HEK293 (cell line): ENCODE measurements at regions of chr1 and their contacts with region 1.

Region 1: DNA sequence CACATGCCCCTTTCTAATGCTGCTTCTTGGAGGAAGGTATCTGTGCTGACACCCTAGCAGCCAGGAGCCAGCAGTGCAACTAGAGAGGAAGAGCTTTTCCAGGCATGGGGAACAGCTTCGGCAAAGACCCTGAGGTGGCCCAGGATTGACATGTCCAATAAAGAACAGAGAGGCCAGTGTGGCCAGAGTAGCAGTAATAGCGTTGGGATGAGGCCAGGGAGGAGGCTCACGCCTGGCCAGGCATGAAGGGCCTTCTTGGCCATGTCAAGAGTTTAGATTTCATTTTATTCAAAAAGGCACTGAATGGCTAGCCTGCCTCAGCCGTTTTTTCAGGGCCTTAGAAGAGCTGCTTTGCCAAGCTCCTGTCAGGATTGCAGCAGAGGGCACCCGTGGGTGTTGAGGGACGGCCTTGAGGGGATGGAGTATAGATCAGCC is 16.3 kb upstream of the ADAMTSL4 start:
- H3K4me3 ChIP-seq: no peak overlapping the region
- H3K27ac ChIP-seq: no peak overlapping the region
- H3K4me1 ChIP-seq: no peaks in the 10 kb centered on the region
- CTCF ChIP-seq: no peak

Region 2: GRCh38 chr1:150281221-150281836 is 251.6 kb before region 1 on chr1:
- CTCF ChIA-PET with region 1: no interaction called
- POLR2A ChIA-PET with region 1: no interaction called
- H3K4me3 ChIP-seq: peak overlapping the region; percentile 28
- H3K27ac ChIP-seq: no peak overlapping the region; the same call in 1 of the 2 replicates
- H3K4me1 ChIP-seq: no peaks in the 10 kb centered on the region
- CTCF ChIP-seq: peak; percentile 60

Region 3: DNA sequence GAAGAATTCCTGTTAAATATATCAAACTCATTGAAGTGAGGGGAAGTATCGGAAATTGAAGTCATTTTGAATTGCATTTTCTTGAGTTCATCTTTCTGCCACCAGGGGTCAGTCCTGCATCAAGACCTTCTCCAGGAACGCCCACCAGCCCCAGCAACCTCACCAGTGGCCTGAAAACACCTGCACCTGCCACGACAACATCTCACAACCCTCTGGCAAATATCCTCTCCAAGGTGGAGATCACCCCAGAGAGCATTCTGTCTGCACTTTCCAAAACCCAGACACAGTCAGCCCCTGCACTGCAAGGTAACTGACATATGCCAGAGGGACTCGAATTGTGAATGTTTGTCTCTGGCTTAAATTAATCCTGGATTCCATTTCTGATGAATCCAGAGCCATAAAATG is 68.5 kb before region 1 on chr1:
- CTCF ChIA-PET with region 1: interaction called, 15 read pairs
- POLR2A ChIA-PET with region 1: no interaction called
- H3K4me3 ChIP-seq: no peak overlapping the region
- H3K27ac ChIP-seq: no peak overlapping the region
- H3K4me1 ChIP-seq: no peaks in the 10 kb centered on the region
- CTCF ChIP-seq: peak; percentile 51; the same call in 1 of the 2 replicates

Region 4: DNA sequence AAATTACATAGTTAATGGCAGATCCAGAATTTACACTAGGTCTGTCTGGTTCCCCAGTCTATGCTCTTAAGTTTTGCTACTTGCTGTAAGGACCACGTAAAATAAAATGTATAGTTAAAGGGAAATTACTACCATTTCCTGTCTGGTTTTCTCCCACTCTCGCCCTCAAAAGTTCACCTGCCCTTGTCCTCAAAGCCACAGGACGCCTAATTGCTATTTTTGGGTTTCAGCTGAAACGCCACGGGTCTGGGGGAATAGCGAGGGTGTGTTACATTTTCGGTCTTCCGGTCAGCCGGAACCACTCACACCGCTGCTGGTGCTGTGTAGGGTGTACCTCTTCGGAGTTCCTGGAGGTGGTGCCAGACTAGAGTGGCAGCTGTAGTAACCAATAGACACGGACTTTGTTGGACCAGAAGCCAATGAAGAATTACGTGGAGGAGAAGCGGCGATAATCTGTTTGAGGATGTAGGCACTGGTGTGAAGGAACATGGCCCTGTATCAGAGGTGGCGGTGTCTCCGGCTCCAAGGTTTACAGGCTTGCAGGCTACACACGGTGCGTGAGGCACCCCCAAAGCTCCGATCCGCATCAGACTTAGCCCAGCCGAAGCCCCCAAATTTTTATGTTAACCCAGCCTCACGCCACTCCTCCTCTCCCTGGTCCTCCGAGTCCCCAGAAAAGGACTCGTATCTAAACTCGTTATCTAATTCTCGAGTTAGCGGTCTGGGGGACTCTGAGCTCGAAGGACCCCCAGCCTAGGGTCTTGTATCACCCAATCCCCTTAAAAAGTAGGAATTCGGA is 45.7 kb before region 1 on chr1 and contains the start of gene TARS2:
- CTCF ChIA-PET with region 1: interaction called, 18 read pairs
- POLR2A ChIA-PET with region 1: interaction called, 4 read pairs
- H3K4me3 ChIP-seq: peak within 1 kb of the TSS; percentile 79
- H3K27ac ChIP-seq: peak within 1 kb of the TSS; percentile 42; the same call in 1 of the 2 replicates
- H3K4me1 ChIP-seq: no peaks in the 10 kb centered on the region; the same call in 1 of the 2 replicates
- CTCF ChIP-seq: no peak; the same call in 1 of the 2 replicates

Region 5: GRCh38 chr1:150543500-150544141 is 10.7 kb after region 1 on chr1:
- CTCF ChIA-PET with region 1: interaction called, 13 read pairs
- POLR2A ChIA-PET with region 1: interaction called, 3 read pairs
- H3K4me3 ChIP-seq: no peak overlapping the region
- H3K27ac ChIP-seq: no peak overlapping the region
- H3K4me1 ChIP-seq: no peaks in the 10 kb centered on the region; the same call in 1 of the 2 replicates
- CTCF ChIP-seq: no peak

Region 6: DNA sequence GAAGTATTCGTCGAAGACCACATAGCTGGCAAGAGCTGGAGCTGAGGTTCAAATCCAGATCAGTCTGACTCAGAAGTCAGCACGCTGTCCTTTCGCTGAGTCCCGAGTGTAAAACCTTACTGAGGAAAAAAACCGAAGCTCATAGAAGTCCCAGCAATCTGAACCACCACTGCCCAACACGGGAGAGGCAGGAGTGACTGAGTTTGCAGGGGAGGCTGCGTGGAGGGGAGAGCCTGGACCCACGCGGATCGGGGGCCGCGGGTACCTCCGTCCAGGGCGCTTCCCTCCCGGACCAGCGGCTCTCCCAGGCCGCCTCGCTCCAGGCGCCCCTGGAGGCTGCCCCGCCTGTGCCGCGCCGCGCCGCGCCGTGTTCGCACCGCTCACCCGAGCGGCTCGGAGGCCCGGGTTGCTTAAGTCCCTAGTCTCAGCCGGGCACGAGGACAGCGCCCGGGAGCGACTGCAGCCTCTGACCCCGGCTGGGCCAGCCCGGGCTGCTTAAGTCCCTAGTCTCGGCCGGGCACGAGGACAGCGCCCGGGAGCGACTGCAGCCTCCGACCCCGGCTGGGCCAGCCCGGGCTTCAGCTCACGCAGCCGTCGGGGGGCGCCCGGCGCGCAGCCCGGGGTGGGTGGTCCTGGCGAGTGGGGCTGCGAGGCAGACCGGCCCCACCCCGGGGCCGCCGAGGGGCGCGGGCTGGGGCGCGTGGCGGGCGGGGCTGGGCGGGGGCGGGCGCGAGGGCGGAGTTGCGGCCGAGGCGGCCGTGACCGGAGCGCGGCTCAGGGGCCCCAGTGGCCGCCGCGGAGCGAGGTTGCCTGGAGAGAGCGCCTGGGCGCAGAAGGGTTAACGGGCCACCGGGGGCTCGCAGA is 16.0 kb after region 1 on chr1 and contains the start of gene ADAMTSL4:
- CTCF ChIA-PET with region 1: interaction called, 13 read pairs
- POLR2A ChIA-PET with region 1: interaction called, 3 read pairs
- H3K4me3 ChIP-seq: peak within 1 kb of the TSS; percentile 50
- H3K27ac ChIP-seq: no peak within 1 kb of the TSS; the same call in 1 of the 2 replicates
- H3K4me1 ChIP-seq: no peaks in the 10 kb centered on the region; the same call in 1 of the 2 replicates
- CTCF ChIP-seq: peak; percentile 42; the same call in 1 of the 2 replicates

Region 7: GRCh38 chr1:151059078-151059907 is 526.4 kb after region 1 on chr1 and contains the start of gene CDC42SE1:
- CTCF ChIA-PET with region 1: no interaction called
- POLR2A ChIA-PET with region 1: no interaction called
- H3K4me3 ChIP-seq: peak within 1 kb of the TSS; percentile 89
- H3K27ac ChIP-seq: peak within 1 kb of the TSS; percentile 83
- H3K4me1 ChIP-seq: peaks cover 4% of the 10 kb centered on the region; the same call in 1 of the 2 replicates
- CTCF ChIP-seq: peak; percentile 98